Calu3 (cell line): ENCODE measurements at regions of chr15 and their contacts with region 1.

Region 1: GRCh38 chr15:96574782-96575181 is 244.3 kb downstream of the NR2F2 start:
- DNase-seq: no peak
- H3K4me3 Mint-ChIP-seq: no peak overlapping the region
- H3K27ac Mint-ChIP-seq: no peak overlapping the region
- H3K4me1 Mint-ChIP-seq: no peaks in the 10 kb centered on the region
- H3K27me3 Mint-ChIP-seq: no peaks in the 10 kb centered on the region
- CTCF ChIP-seq: no peak

Region 2: DNA sequence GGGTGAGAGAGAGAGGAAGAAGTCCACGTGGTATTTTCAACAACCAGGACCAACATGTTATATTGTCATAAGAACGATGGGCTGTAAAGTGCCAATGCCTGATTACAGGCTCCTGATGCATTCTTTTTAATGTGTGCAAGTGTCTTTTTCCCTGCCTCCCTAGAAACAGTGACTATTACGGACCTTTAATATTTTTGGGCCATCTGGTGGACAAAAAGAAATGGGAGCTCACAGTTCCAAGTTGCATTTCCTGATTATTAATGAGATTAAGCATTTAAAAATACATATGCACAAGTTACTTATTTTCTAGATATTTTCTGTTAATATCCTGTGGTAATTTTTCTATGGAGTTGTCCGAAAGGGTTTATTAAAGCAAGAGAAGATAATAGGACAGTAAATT is 286.0 kb after region 1 on chr15:
- CTCF ChIA-PET with region 1: interaction called, 12 read pairs
- intact Hi-C with region 1: no loop called
- DNase-seq: no peak
- H3K4me3 Mint-ChIP-seq: no peak overlapping the region
- H3K27ac Mint-ChIP-seq: no peak overlapping the region
- H3K4me1 Mint-ChIP-seq: no peaks in the 10 kb centered on the region
- H3K27me3 Mint-ChIP-seq: no peaks in the 10 kb centered on the region
- CTCF ChIP-seq: no peak